ENCODE measurements at regions of chr1 and their contacts with region 1.

Region 1: DNA sequence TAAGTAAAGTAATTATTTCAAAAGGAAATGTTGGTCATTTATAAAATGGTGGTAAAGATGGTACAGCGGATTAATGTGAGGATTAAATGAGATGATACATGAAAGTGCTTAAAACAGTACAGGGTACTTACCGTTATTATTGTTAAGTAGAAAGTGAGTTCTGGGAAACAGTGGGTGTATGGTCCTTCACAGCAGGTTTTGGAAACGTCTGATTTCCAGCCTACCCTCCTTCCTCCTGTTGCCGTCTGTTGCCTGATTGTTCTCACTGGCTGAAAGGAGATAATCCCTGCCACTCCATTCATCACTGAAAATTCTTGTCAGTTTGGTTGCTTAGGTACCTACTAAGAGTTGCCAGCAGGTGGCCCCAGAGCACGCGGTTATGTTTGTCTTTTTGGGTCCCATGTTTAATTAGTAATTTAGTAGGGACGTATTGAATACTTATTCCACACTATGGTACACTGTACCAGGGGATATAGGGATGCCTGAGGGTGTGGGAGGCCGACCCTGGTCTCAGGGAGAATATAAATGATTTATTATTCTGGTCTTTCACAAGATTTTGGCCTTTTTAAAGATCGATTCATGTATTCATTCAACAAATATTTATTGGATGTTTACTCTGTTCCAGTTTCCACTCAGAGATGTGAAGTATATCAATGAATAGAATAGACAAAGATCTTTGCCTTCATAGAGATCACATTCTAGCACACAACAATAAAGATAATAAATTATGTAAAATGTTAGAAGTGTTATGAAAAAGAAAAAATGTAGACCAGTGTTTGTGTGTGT is 30.8 kb upstream of the RPTN start:
- DNase-seq: peak; percentile 83
- ATAC-seq: peak; percentile 45
- H3K4me3 ChIP-seq: peak overlapping the region; percentile 67
- H3K27ac ChIP-seq: no peak overlapping the region
- H3K4me1 ChIP-seq: peaks cover 17% of the 10 kb centered on the region
- H3K27me3 ChIP-seq: no peaks in the 10 kb centered on the region
- CTCF ChIP-seq: peak; percentile 95

Region 2: DNA sequence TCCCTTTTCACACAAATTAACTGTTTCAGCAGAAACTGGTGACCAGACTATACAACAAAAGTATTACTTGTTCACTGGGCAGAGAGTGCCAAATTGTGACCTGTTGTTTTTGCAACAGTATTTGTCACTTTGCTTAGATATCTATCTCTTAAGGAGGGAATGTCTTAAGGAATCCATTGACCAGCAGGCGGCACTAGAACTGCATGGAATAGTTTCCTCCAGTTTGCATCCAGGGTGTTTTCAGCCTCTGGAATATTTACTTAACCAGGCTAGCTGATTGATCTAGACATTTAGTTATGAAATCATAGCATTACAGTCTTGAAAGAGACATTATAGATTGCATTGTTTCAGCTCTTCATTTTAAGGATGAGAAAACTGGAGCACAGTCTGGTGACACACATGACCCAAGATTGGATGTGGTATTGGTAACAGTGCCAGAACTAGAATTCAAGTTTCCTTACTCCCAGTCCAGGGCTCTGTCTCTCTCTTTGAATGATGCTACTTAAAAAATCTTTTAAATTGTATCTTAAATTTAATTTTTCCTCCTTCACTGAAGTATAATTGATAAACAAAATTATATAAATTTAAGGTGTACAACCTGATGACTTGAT is 47.8 kb before region 1 on chr1:
- CTCF ChIA-PET with region 1: interaction called, 3 read pairs
- POLR2A ChIA-PET with region 1: no interaction called
- intact Hi-C with region 1: loop called (anchors 1 kb)
- DNase-seq: peak; percentile 90
- ATAC-seq: peak; percentile 95
- H3K4me3 ChIP-seq: no peak overlapping the region
- H3K27ac ChIP-seq: no peak overlapping the region
- H3K4me1 ChIP-seq: no peaks in the 10 kb centered on the region
- H3K27me3 ChIP-seq: peaks cover 25% of the 10 kb centered on the region; the same call in 1 of the 2 replicates
- CTCF ChIP-seq: peak; percentile 99

Region 3: DNA sequence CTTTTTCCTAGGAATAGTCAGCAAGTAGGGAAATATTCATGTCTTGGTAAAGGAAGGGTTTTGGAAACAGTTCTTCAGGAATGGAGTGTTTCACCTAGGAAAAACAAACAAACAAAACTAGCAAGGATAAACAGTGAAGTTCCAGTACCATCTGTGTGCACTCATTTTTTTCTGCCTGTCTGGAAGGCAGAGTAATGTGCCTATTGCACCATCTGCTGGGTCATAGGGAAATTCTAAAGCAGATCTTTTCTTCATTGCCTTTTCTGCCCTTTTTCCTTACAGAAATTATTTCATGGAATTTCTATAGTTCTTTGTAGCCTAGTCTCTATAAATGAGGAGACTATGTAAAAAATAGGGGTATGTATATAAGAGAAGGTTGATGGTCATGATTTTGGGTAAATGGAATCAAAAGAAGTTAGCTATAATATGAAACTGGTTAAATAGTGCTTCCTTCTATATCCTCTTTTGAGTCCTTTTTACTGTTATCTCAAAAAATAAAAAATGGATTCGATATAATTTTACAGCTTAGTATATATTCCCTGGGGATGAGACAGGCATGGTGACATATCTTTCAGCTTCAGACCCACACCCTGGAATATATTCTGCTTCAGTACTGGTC is 37.6 kb after region 1 on chr1:
- CTCF ChIA-PET with region 1: interaction called, 4 read pairs
- POLR2A ChIA-PET with region 1: no interaction called
- intact Hi-C with region 1: loop called (anchors 1 kb)
- DNase-seq: peak; percentile 23
- ATAC-seq: peak; percentile 53
- H3K4me3 ChIP-seq: no peak overlapping the region
- H3K27ac ChIP-seq: no peak overlapping the region
- H3K4me1 ChIP-seq: no peaks in the 10 kb centered on the region
- H3K27me3 ChIP-seq: no peaks in the 10 kb centered on the region; the same call in 1 of the 2 replicates
- CTCF ChIP-seq: peak; percentile 57

Region 4: GRCh38 chr1:152347116-152347728 is 157.4 kb after region 1 on chr1:
- CTCF ChIA-PET with region 1: interaction called, 4 read pairs
- POLR2A ChIA-PET with region 1: no interaction called
- intact Hi-C with region 1: loop called (anchors 1 kb)
- DNase-seq: peak; percentile 91
- ATAC-seq: peak; percentile 76
- H3K4me3 ChIP-seq: no peak overlapping the region
- H3K27ac ChIP-seq: no peak overlapping the region
- H3K4me1 ChIP-seq: no peaks in the 10 kb centered on the region
- H3K27me3 ChIP-seq: peaks cover 5% of the 10 kb centered on the region; the same call in 1 of the 2 replicates
- CTCF ChIP-seq: peak; percentile 95

Region 5: GRCh38 chr1:152440635-152441471 is 251.0 kb after region 1 on chr1:
- CTCF ChIA-PET with region 1: no interaction called
- POLR2A ChIA-PET with region 1: no interaction called
- intact Hi-C with region 1: loop called (anchors 2 kb)
- DNase-seq: peak; percentile 82
- ATAC-seq: peak; percentile 97
- H3K4me3 ChIP-seq: no peak overlapping the region
- H3K27ac ChIP-seq: no peak overlapping the region
- H3K4me1 ChIP-seq: peaks cover 6% of the 10 kb centered on the region
- H3K27me3 ChIP-seq: peaks cover 25% of the 10 kb centered on the region
- CTCF ChIP-seq: peak; percentile 94

Region 6: GRCh38 chr1:152459596-152460528 is 270.0 kb after region 1 on chr1:
- CTCF ChIA-PET with region 1: interaction called, 13 read pairs
- POLR2A ChIA-PET with region 1: no interaction called
- intact Hi-C with region 1: loop called (anchors 1 kb)
- DNase-seq: peak; percentile 76
- ATAC-seq: peak; percentile 66
- H3K4me3 ChIP-seq: no peak overlapping the region
- H3K27ac ChIP-seq: no peak overlapping the region
- H3K4me1 ChIP-seq: no peaks in the 10 kb centered on the region
- H3K27me3 ChIP-seq: no peaks in the 10 kb centered on the region
- CTCF ChIP-seq: peak; percentile 94

Measured in PC-3 (cell line).